ENCODE measurements at regions of chr11 and their contacts with region 1.

Region 1: DNA sequence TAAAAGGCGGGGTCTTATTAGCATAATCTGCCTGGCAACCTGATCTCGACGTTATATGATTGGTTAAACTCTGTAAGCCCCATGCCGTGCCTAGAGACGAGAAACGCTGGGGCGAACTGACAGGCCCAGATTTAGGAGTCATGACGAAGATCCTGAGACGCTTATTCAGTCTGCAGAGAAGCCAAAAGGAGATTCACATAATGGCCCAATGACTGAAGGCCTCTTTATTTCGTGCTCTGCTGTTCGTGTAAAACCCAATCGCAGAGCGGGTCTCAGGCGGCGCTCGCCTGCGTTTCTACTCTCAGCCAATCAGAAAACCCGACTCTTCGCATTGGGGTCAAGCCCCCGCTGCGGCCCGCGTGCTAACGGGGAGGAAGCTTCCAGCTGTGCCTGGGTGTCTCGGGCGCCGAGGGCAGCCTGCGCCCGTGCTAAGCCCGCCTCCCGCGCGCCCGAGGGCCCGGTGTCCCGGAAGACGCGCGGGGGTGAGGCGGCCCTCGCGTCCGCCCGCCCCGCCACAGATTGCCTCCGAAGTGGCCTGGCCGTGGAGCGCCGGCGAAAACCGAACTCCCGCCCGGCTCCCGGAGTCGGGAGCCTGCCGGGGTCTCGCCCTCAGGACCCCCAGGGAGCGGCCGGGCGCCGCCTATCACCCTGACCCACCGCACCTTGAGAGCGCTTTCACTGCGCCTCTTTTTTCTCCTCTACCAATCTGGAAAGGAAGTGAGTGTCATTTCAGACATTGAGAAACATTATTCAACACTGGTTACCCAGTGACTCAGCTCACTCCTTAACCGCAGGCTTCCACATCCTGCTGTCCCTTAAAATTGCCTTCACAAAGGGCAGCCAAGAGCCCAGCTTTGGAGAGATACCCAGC is 446 bp upstream of the PRDM10 start:
- DNase-seq: peak; percentile 90
- H3K4me3 Mint-ChIP-seq: peak overlapping the region; percentile 98
- H3K27ac Mint-ChIP-seq: peak overlapping the region; percentile 100
- H3K4me1 Mint-ChIP-seq: peaks cover 30% of the 10 kb centered on the region
- H3K27me3 Mint-ChIP-seq: peaks cover 6% of the 10 kb centered on the region

Region 2: DNA sequence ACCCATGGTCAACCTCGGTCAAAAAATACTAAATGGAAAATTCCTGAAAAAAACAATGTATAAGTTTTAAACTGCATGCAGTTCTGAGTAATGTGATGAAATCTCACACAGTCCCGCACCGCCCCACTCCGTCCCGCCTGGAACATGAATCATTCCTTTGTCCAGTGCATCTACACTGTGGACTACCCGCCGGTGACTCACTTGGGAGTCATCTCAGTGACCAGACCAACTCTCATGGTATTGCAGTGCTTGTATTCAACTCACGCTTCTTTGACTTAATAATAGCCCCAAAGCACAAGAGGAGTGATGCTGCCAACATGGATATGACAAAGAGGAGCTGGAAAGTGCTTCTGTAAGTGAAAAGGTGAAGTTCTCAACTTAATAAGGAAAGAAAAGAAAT is 859.7 kb before region 1 on chr11:
- intact Hi-C with region 1: no loop called
- DNase-seq: no peak
- H3K4me3 Mint-ChIP-seq: no peak overlapping the region
- H3K27ac Mint-ChIP-seq: no peak overlapping the region
- H3K4me1 Mint-ChIP-seq: no peaks in the 10 kb centered on the region
- H3K27me3 Mint-ChIP-seq: peaks cover 1% of the 10 kb centered on the region

Region 3: DNA sequence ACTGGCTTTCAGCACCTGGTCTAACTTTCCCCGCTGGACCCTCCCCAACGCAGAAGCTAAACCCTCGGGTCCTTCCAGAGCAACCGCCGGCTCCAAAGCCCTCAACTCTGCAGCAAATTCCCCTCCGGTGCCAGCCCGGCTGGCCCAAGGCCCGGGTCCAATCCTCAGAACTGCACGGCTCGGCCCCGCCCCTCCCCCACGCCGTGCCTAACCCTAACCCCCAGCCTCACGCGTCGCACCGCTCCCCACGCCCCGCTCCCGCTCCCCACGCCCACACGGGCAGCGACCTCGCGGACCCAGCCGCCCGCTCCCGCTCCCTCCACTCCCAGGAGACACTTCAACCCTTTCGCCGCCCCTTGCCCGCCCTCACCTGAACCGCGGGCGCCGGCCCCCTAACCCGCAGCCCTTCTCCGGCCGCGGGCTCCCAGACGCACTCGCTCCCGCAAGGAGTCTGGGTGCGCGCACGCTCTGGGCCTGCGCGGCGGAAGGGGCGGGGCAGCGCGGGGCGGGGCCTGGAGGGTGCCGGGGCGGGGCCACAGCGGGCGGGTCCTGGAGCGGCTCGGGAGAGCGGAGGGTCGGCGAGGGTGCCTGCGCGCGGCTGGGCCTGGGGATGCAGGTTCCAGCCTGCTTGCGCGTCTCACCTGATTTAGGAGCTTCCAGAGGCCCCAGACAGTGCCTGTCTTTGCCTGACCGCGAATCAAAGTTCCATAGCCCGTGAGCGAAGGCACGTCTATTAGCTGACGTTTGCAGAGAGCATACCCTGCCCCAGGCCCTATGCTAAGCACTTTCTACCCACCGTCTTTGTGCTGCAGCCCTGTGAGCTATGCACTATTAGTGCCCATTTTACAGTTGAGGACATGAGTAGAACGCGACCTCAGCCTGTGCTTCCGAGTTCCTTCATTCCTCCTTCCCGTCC is 107.7 kb before region 1 on chr11 and contains the start of gene NFRKB:
- intact Hi-C with region 1: loop called (anchors 1 kb)
- DNase-seq: peak; percentile 81
- H3K4me3 Mint-ChIP-seq: peak within 1 kb of the TSS; percentile 90
- H3K27ac Mint-ChIP-seq: peak within 1 kb of the TSS; percentile 82
- H3K4me1 Mint-ChIP-seq: peaks cover 26% of the 10 kb centered on the region
- H3K27me3 Mint-ChIP-seq: no peaks in the 10 kb centered on the region
- total RNA-seq, gene NFRKB: 42.6 and 42.8 TPM in 2 replicates

Region 4: DNA sequence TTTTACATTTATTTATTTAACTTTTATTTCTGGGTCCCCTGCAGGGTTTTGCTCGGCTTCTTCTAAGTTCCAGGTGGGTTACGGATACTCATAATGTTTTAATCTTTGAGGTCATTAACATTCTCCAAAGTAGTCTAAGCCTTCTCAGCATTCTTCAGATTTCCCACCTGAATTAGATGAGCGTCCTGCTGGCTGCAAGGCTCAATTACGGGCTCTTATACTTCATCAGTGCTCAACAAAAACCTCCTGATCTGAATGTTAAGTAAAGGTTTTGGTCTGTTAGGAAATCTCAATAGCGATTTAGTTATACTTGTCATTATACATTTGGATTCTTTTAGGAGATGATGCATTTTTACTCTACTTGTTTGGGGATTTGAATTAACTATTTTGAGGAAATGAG is 80.4 kb before region 1 on chr11:
- intact Hi-C with region 1: loop called (anchors 2 kb)
- DNase-seq: no peak
- H3K4me3 Mint-ChIP-seq: no peak overlapping the region
- H3K27ac Mint-ChIP-seq: no peak overlapping the region
- H3K4me1 Mint-ChIP-seq: peaks cover 9% of the 10 kb centered on the region
- H3K27me3 Mint-ChIP-seq: no peaks in the 10 kb centered on the region

Region 5: DNA sequence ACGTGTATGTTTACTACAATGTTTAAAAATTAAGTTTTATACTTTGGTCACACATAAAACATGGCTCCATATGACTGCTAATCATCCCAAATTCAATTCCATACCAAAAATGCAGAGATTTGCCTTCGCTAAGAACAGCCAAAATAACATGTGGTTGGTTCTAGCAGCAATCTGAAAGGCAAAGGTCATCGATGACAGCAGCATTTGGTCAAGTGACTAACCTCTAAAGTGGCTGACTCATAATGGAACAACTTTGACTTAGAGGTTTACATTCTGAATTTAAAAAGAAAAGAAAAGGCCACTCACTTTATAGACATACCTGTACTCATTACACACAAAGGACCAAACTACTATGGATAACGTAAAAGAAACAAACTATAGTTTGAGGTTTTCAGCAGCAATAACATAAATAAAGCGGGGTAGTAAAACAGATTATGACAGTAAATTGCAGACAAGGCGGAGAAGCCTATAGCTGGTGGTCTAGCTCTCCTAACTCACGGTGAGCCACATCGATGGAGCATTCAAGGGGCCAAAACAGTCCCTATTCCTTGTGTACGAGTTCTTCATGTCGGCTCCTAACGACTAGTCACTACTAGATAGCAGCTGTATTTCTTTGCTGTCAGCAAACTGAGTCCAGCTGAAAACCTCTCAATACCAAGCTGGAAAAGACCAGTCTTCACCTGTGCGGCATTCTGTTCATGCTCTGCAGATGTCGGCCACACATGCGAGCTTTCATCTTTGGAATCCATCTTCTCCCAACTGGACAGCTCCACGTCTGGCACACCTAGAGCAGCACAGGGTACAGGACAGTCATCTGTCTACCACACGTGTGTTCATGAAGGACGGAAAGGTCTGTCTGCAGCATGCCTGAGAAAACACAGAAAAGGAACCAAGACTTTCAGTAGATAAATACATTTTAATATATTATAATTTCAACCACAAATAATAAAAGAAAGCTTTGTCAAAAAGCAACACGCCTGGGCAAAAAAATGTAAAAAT is 42.6 kb before region 1 on chr11:
- intact Hi-C with region 1: loop called (anchors 1 kb)
- DNase-seq: no peak
- H3K4me3 Mint-ChIP-seq: no peak overlapping the region
- H3K27ac Mint-ChIP-seq: peak overlapping the region; percentile 65
- H3K4me1 Mint-ChIP-seq: peaks cover 25% of the 10 kb centered on the region
- H3K27me3 Mint-ChIP-seq: no peaks in the 10 kb centered on the region

Region 6: GRCh38 chr11:130118636-130119387 is 115.7 kb after region 1 on chr11:
- intact Hi-C with region 1: loop called (anchors 2 kb)
- DNase-seq: no peak
- H3K4me3 Mint-ChIP-seq: no peak overlapping the region
- H3K27ac Mint-ChIP-seq: no peak overlapping the region
- H3K4me1 Mint-ChIP-seq: peaks cover 41% of the 10 kb centered on the region
- H3K27me3 Mint-ChIP-seq: peaks cover 12% of the 10 kb centered on the region

Measured in activated T-helper 2 cell treated with anti-CD3 and anti-CD28 coated beads, Interferon-gamma antibody, Interleukin-2, Interleukin-4, amounts not matched to agents 10 μg/mL and 5 μg/mL and 100 μg/mL, durations not matched to agents 14 hours and 24 hours and 36 hours (primary cell).